Activated T-helper 1 cell treated with anti-CD3 and anti-CD28 coated beads, Interleukin-12 subunit alpha, Interleukin-12 subunit beta, Interleukin-2, Interleukin-4 antibody, amounts not matched to agents 30 ng/mL and 10 ng/mL and 1 ng/mL, durations not matched to agents 14 hours and 24 hours and 36 hours (primary cell): ENCODE measurements at regions of chr12 and their contacts with region 1.

Region 1: DNA sequence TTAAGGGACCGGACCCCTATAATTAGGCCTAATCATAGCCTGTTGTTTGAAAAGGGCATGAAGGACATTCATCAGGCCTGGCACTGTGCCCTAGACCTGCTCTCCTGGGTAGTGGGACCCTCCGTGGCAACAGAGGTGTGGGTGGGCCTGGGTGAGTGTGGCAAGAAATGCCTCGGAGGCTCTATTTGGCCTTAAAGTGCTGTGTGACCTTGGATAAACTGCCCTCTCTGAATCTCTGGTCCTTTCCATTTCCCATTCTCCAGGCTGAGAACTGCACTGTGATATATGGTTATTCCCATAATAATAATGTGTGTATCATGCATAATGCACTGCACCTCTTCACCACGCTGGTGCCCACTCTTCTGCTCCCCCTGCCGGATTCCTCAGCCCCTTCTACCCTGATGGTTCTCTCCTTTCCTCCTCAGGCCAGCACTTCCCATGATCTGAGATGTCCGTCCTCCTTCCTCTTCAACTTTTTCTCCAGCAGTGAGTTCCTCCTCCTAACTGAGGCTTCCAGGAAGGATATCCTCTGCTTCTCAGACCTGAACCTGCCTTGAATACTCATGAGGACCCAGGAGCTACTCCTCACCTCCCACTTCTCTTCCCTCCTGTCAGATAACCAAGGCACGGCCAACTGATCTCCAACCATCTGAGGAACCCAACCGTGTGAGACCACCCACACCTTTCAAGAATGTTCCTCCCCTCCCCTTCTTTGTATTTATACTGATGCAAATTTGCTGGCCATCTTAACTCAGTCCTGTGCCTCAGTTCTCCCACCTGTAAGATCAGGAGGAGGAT is 111.0 kb upstream of the PZP start:
- DNase-seq: no peak
- H3K4me3 Mint-ChIP-seq: no peak overlapping the region
- H3K27ac Mint-ChIP-seq: no peak overlapping the region
- H3K4me1 Mint-ChIP-seq: no peaks in the 10 kb centered on the region
- H3K27me3 Mint-ChIP-seq: no peaks in the 10 kb centered on the region

Region 2: DNA sequence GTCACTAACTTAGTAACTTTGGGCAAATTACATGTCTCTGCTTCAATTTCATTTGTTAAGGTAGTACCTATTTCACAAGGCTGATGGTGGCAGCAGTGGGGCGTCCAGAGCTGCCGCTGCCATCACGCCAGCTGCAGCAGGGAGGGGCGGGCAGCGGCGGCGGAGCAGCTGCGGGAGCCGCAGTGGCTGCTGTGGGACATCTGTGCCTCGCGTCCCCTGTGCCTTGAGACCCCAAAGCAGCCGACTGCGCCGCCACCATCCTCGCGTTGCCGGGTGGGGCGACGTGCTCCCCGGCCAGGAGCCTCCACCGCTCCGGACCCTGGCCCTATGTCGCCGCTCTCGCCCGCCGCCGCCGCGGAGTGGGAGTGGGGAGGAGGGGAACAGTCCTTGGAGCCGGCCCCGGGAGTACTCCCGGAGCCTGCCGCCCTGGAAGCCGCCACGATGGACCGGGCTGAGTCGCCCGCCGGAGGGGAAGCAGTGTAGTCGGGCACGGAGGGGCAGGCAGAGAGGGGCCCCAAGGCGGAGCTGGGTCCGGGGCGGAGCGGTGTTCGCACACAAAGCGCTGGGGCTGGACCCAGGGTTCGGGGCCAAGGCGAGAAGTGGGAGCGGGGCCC is 254.9 kb before region 1 on chr12:
- intact Hi-C with region 1: loop called (anchors 5 kb)
- DNase-seq: no peak
- H3K4me3 Mint-ChIP-seq: peak overlapping the region; percentile 64
- H3K27ac Mint-ChIP-seq: no peak overlapping the region
- H3K4me1 Mint-ChIP-seq: peaks cover 7% of the 10 kb centered on the region
- H3K27me3 Mint-ChIP-seq: peaks cover 14% of the 10 kb centered on the region